PC-9 (cell line): ENCODE measurements at regions of chr11 and their contacts with region 1.

Region 1: GRCh38 chr11:17063171-17064002 is 14.1 kb downstream of the RPS13 start:
- DNase-seq: peak in 1 of 2 experiments; percentile 59
- H3K4me3 ChIP-seq: no peak overlapping the region
- H3K27ac ChIP-seq: no peak overlapping the region
- H3K4me1 ChIP-seq: no peaks in the 10 kb centered on the region
- H3K27me3 ChIP-seq: no peaks in the 10 kb centered on the region
- CTCF ChIP-seq: peak; percentile 86

Region 2: DNA sequence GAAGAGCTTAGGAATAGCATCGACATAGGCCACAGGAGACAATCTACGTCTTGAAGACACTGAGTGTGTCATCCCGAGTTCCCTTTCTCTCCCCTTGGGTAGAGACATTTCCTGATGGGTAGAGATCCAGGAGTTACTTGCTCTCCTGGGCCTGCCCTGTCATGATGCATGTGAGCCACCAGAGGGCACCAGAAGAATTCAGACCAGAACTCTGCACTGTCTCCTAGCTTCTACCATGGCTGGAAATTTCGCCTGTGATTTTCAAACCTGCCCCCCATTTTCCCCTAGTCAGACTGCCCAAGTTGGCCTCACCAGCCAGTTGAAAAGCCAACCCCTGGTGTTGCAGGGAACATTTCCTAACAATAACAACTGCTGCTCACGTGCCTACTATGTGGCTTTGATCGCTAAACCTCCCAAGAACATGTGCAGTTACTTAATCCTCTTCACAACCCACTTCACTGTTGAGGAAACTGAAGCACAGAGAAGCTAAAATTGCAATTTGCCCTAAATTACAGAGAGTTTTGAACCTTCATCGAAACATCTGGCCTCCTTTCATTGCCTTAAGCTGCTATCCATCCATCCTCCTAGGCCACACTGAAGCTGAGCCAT is 277.8 kb before region 1 on chr11:
- CTCF ChIA-PET with region 1: interaction called, 6 read pairs
- POLR2A ChIA-PET with region 1: no interaction called
- intact Hi-C with region 1: loop called (anchors 5 kb)
- DNase-seq: peak; percentile 43 to 49
- H3K4me3 ChIP-seq: no peak overlapping the region
- H3K27ac ChIP-seq: no peak overlapping the region
- H3K4me1 ChIP-seq: peaks cover 35% of the 10 kb centered on the region
- H3K27me3 ChIP-seq: no peaks in the 10 kb centered on the region
- CTCF ChIP-seq: peak; percentile 74

Region 3: GRCh38 chr11:16820324-16821092 is 242.9 kb before region 1 on chr11:
- CTCF ChIA-PET with region 1: interaction called, 5 read pairs
- POLR2A ChIA-PET with region 1: no interaction called
- intact Hi-C with region 1: loop called (anchors 1 kb)
- DNase-seq: peak; percentile 58 to 78
- H3K4me3 ChIP-seq: no peak overlapping the region
- H3K27ac ChIP-seq: peak overlapping the region; percentile 47
- H3K4me1 ChIP-seq: peaks cover 30% of the 10 kb centered on the region
- H3K27me3 ChIP-seq: no peaks in the 10 kb centered on the region
- CTCF ChIP-seq: peak; percentile 81

Region 4: GRCh38 chr11:16935518-16936302 is 127.7 kb before region 1 on chr11:
- CTCF ChIA-PET with region 1: interaction called, 4 read pairs
- POLR2A ChIA-PET with region 1: no interaction called
- intact Hi-C with region 1: loop called (anchors 2 kb)
- DNase-seq: no peak
- H3K4me3 ChIP-seq: no peak overlapping the region
- H3K27ac ChIP-seq: no peak overlapping the region
- H3K4me1 ChIP-seq: no peaks in the 10 kb centered on the region
- H3K27me3 ChIP-seq: no peaks in the 10 kb centered on the region
- CTCF ChIP-seq: peak; percentile 72

Region 5: GRCh38 chr11:16945671-16946469 is 117.5 kb before region 1 on chr11:
- CTCF ChIA-PET with region 1: interaction called, 20 read pairs
- POLR2A ChIA-PET with region 1: no interaction called
- intact Hi-C with region 1: loop called (anchors 1 kb)
- DNase-seq: peak; percentile 58 to 73
- H3K4me3 ChIP-seq: no peak overlapping the region
- H3K27ac ChIP-seq: no peak overlapping the region; the same call in 1 of the 2 replicates
- H3K4me1 ChIP-seq: peaks cover 15% of the 10 kb centered on the region
- H3K27me3 ChIP-seq: no peaks in the 10 kb centered on the region
- CTCF ChIP-seq: peak; percentile 84

Region 6: DNA sequence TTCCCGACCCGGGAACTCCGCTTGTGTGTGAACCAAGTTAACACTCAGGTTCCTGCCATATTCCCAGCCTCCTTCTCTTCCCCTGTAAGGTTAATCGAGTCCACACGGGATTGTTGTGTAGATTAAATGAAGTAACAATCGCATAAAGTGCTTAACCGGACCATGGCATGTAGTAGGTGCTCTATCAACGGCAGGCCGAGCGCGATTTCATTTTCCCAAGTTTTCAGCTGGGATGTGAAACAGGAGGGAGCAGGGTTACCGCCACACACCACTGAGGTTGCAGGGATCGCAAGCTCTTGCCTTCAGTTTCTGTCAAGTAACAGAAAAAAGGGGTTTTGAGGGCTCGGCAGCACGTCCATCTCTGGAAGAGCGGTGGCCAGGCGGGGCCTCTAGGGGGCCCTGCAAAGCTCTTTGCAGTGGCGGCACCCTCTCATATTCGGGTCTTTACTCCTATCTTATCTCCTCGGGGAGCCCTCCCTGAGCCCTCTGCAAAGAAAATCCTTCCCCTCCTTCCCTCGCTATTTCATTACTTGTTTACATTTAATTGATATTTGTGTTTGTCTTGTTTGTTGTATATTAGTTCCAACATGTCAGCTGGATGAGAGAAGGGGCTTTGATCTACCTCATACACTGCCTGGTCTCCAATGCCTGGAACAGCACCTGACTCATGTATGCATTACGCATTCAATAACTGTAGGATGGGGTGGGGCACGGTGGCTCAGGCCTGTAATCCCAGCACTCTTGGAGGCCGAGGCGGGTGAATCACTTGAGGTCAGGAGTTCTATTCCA is 48.4 kb before region 1 on chr11:
- CTCF ChIA-PET with region 1: no interaction called
- POLR2A ChIA-PET with region 1: interaction called, 30 read pairs
- intact Hi-C with region 1: loop called (anchors 5 kb)
- DNase-seq: peak; percentile 57 to 88
- H3K4me3 ChIP-seq: peak overlapping the region; percentile 89
- H3K27ac ChIP-seq: peak overlapping the region; percentile 70
- H3K4me1 ChIP-seq: peaks cover 60% of the 10 kb centered on the region
- H3K27me3 ChIP-seq: no peaks in the 10 kb centered on the region
- CTCF ChIP-seq: peak; percentile 71

Region 7: DNA sequence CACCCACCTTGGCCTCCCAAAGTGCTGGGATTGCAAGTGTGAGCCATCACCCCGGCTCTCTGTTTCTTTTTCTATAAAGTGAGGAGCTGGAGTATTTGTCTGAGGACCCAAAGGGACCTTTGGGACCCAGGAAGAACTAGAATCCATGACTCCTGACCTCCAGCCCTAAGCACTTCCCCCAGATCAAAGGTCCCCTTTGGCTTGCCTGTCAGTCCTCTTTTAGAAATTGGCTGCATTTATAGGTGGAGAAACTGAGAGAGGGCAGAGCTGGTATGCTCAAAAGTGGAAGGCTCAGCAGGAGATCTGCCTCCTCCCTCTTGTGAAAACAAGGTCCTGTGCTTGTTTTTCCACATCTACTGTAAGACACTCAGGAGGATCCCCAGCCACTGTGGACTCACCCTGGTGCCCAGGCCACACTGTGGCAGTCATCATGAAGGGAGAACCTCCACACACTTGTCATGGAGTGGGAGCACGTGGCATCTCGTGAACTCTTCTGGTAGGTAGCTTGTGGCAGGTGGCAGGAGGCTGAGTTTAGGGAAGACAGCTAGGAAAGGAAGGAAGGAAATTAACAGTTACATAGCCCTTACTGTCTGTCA is 36.8 kb before region 1 on chr11:
- CTCF ChIA-PET with region 1: no interaction called
- POLR2A ChIA-PET with region 1: no interaction called
- intact Hi-C with region 1: no loop called
- DNase-seq: no peak
- H3K4me3 ChIP-seq: no peak overlapping the region
- H3K27ac ChIP-seq: no peak overlapping the region
- H3K4me1 ChIP-seq: no peaks in the 10 kb centered on the region
- H3K27me3 ChIP-seq: no peaks in the 10 kb centered on the region
- CTCF ChIP-seq: no peak

Region 8: GRCh38 chr11:17046690-17047089 is 16.7 kb before region 1 on chr11:
- CTCF ChIA-PET with region 1: no interaction called
- POLR2A ChIA-PET with region 1: no interaction called
- intact Hi-C with region 1: no loop called
- DNase-seq: no peak
- H3K4me3 ChIP-seq: no peak overlapping the region
- H3K27ac ChIP-seq: no peak overlapping the region
- H3K4me1 ChIP-seq: peaks cover 11% of the 10 kb centered on the region
- H3K27me3 ChIP-seq: no peaks in the 10 kb centered on the region
- CTCF ChIP-seq: no peak

Region 9: GRCh38 chr11:17154409-17155159 is 91.2 kb after region 1 on chr11:
- CTCF ChIA-PET with region 1: no interaction called
- POLR2A ChIA-PET with region 1: no interaction called
- intact Hi-C with region 1: no loop called
- DNase-seq: no peak
- H3K4me3 ChIP-seq: no peak overlapping the region
- H3K27ac ChIP-seq: no peak overlapping the region
- H3K4me1 ChIP-seq: no peaks in the 10 kb centered on the region
- H3K27me3 ChIP-seq: no peaks in the 10 kb centered on the region
- CTCF ChIP-seq: no peak

Region 10: DNA sequence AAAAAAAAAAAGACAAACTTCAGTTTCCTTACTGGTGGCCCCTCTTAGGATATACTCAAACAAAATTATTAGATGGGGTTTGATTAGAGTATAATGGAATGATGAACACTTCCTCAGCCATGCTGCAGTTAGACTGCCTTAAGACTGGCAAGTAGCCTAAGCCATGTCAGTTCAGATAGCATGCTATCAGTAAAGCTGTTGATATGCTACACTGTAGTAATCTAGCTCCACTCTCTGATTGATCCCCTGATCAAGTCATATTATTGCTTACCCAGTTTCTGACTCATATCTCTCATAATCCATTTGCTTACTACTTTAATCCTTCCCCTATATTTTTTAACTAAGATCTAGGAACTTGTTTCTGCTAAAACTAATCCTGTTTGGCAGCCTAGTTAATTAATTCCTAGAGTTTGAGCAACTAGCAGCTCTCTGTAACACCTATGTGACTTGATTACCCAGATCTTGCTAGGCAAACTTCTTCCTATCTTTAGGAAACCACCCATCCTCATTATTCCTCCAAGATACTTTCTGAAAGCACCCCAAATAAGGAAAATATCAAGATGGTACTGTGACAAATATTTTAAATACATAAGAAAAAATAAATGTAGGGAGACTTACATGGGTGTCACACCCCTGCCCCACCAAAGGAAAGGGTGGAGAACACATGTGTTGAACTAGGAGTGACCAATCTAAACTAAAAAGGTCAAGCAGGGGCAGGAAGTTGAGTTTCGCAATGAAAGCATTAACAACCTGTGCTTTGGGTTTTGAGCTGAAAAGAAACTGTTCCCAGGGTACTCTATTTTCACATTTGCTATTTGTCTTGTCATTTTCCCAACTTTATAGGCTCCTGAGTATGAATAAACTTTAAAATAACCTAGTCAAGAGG is 101.2 kb after region 1 on chr11:
- CTCF ChIA-PET with region 1: no interaction called
- POLR2A ChIA-PET with region 1: no interaction called
- intact Hi-C with region 1: no loop called
- DNase-seq: peak; percentile 2 to 36
- H3K4me3 ChIP-seq: no peak overlapping the region
- H3K27ac ChIP-seq: peak overlapping the region; percentile 36
- H3K4me1 ChIP-seq: peaks cover 21% of the 10 kb centered on the region
- H3K27me3 ChIP-seq: no peaks in the 10 kb centered on the region
- CTCF ChIP-seq: no peak